ENCODE measurements at regions of chr6 and their contacts with region 1.

Region 1: DNA sequence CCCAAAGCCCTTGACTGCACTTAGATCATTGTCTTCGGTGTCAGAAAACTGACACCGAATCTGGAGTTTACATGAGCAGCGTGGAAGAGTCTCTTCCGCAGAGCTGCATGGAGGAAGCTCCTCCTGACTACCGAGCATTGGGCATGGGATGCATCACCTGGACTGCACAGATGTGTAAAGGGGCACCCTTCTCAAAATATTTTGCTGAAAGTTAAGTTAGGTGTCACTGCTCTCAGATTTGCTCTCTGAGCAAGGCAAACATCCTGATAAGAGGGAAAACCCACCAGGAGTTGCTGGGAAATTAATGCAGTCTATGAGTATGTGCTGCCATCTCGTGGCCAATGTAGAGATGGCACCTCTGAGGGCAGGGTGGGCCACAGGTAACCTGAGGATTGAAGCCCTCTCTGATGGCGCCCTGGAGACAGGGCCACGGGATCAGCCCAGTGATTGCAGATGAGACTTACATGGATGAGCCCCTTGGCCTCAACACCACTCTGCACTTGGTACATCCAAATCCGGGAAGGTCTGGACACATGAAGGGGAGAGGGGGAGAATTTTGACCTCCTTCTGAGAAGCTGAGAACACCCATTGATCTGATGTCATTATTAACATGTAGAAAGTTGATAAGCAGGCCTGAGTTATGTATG is 129.9 kb downstream of the LPA start:
- DNase-seq: no peak
- ATAC-seq: peak; percentile 81
- H3K4me3 ChIP-seq: no peak overlapping the region
- H3K27ac ChIP-seq: no peak overlapping the region
- H3K4me1 ChIP-seq: no peaks in the 10 kb centered on the region
- H3K27me3 ChIP-seq: no peaks in the 10 kb centered on the region; a peak in 1 of 4 replicates
- CTCF ChIP-seq: peak; percentile 75 to 86 (median 84)
- EP300 ChIP-seq: no peak
- POLR2A ChIP-seq: no peak
- RAD21 ChIP-seq: peak; percentile 83

Region 2: DNA sequence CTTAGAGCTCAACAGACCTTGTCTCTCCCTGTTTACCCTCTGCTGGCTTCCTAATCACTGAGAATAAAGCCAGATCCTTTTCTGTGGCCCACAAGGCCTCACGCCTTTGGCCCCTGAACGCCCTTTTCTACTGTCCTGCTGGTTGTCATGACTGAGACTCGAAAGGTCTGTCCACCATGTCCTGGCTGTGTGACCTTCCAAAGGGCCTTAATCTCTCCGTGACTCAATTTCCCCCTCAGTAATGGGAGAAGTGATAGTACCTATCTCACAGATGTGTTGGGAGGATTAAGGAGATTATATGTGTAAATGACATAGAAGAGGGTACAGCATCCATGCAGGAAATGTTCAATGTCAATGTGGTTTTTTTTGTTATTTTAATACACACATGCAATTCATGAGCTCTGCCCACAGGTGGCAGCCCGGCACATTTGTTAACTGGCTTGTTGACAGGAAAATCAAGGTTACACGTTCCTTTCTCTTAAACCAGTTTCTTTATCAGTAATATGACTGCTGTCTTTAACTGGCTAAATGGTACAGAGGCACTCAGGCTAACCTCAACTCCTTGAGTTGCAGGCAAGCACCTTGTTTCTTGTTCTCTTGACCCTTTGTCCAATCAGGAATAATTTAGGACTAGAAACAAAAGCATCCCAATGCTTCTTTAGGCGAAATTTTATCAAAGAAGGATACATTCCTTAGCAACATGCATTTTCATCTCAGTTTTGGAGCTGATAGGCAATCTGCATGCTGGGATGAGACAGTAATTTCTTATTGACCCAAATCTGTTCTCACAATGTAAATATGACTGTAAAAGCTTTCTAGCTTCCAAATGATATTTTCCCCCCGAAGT is 396.0 kb before region 1 on chr6:
- CTCF ChIA-PET with region 1: interaction called, 15 read pairs
- POLR2A ChIA-PET with region 1: no interaction called
- RAD21 ChIA-PET with region 1: no interaction called
- SMC1A ChIA-PET with region 1: no interaction called
- in situ Hi-C with region 1: no loop called
- intact Hi-C with region 1: loop called (anchors 1 kb)
- DNase-seq: peak; percentile 23
- ATAC-seq: peak; percentile 72
- H3K4me3 ChIP-seq: no peak overlapping the region
- H3K27ac ChIP-seq: no peak overlapping the region
- H3K4me1 ChIP-seq: no peaks in the 10 kb centered on the region
- H3K27me3 ChIP-seq: no peaks in the 10 kb centered on the region; a peak in 1 of 4 replicates
- CTCF ChIP-seq: peak; percentile 67 to 85 (median 77)
- EP300 ChIP-seq: no peak
- POLR2A ChIP-seq: no peak
- RAD21 ChIP-seq: peak; percentile 73

Region 3: GRCh38 chr6:160455541-160456213 is 78.5 kb before region 1 on chr6:
- CTCF ChIA-PET with region 1: no interaction called
- POLR2A ChIA-PET with region 1: no interaction called
- RAD21 ChIA-PET with region 1: no interaction called
- SMC1A ChIA-PET with region 1: no interaction called
- in situ Hi-C with region 1: loop called (anchors 5 kb)
- intact Hi-C with region 1: loop called (anchors 1 kb)
- DNase-seq: peak; percentile 5
- ATAC-seq: peak; percentile 90
- H3K4me3 ChIP-seq: no peak overlapping the region
- H3K27ac ChIP-seq: no peak overlapping the region
- H3K4me1 ChIP-seq: no peaks in the 10 kb centered on the region
- H3K27me3 ChIP-seq: no peaks in the 10 kb centered on the region; a peak in 1 of 4 replicates
- CTCF ChIP-seq: peak; percentile 85 to 93 (median 89)
- EP300 ChIP-seq: no peak
- POLR2A ChIP-seq: no peak
- RAD21 ChIP-seq: peak; percentile 98

Region 4: GRCh38 chr6:160462551-160463109 is 71.5 kb before region 1 on chr6:
- CTCF ChIA-PET with region 1: no interaction called
- POLR2A ChIA-PET with region 1: no interaction called
- RAD21 ChIA-PET with region 1: no interaction called
- SMC1A ChIA-PET with region 1: no interaction called
- in situ Hi-C with region 1: loop called (anchors 5 kb)
- intact Hi-C with region 1: loop called (anchors 1 kb)
- DNase-seq: peak; percentile 69
- ATAC-seq: peak; percentile 86
- H3K4me3 ChIP-seq: no peak overlapping the region
- H3K27ac ChIP-seq: peak overlapping the region; percentile 11; the same call in 1 of the 2 replicates
- H3K4me1 ChIP-seq: peaks cover 18% of the 10 kb centered on the region
- H3K27me3 ChIP-seq: no peaks in the 10 kb centered on the region
- CTCF ChIP-seq: no peak
- EP300 ChIP-seq: peak in 1 of 2 experiments; percentile 56; a peak in 1 of 4 replicates
- POLR2A ChIP-seq: no peak
- RAD21 ChIP-seq: no peak

Region 5: DNA sequence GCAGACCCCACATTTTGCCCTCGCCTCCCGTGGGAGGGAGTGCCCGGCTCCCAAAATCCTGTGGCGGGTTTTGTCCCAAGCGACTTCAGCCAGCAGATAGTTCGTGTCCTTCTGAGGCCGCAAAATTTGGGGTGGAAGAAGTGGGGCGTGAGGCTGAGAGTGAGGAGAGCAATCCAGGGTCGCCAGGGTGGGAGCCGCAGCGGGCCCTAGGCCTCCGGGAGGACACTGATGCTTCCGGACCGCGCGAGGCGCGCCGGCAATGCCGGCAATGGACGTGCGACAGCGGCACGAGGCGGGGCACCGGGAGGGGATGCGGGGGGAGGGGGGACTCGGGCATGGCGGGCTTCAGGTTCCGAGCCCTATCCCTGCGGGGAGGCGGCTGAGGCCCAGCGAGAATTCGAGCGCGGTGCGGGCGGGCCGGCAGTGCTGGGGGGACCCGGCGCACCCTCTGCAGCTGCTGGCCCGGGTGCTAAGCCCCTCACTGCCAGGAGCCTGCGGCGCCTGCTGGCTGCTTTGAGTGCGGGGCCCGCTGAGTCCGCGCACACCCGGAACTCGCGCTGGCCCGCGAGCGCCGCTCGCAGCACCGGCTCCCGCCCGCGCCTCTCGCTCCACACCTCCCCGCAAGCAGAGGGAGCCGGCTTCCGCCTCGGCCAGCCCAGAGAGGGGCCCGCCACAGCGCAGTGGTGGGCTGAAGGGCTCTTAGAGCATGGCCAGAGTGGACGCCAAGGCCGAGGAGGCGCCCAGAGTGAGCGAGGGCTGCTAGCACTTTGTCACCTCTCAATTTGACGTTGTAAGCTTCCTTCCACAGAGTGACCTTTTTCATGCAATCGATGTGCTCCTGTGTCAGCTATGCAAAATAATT is 13.9 kb before region 1 on chr6:
- CTCF ChIA-PET with region 1: interaction called, 69 read pairs
- POLR2A ChIA-PET with region 1: interaction called, 3 read pairs
- RAD21 ChIA-PET with region 1: interaction called, 6 read pairs
- SMC1A ChIA-PET with region 1: interaction called, 19 read pairs
- in situ Hi-C with region 1: no loop called
- intact Hi-C with region 1: loop called (anchors 1 kb)
- DNase-seq: no peak
- ATAC-seq: peak; percentile 89
- H3K4me3 ChIP-seq: peak overlapping the region; percentile 69; the same call in 1 of the 2 replicates
- H3K27ac ChIP-seq: no peak overlapping the region
- H3K4me1 ChIP-seq: no peaks in the 10 kb centered on the region
- H3K27me3 ChIP-seq: no peaks in the 10 kb centered on the region
- CTCF ChIP-seq: peak in 1 of 3 experiments; percentile 92; a peak in 4 of 6 replicates
- EP300 ChIP-seq: no peak
- POLR2A ChIP-seq: no peak
- RAD21 ChIP-seq: peak; percentile 74

Region 6: GRCh38 chr6:160583794-160584193 is 49.6 kb after region 1 on chr6:
- CTCF ChIA-PET with region 1: no interaction called
- POLR2A ChIA-PET with region 1: no interaction called
- RAD21 ChIA-PET with region 1: no interaction called
- SMC1A ChIA-PET with region 1: no interaction called
- in situ Hi-C with region 1: no loop called
- intact Hi-C with region 1: no loop called
- DNase-seq: no peak
- ATAC-seq: no peak
- H3K4me3 ChIP-seq: no peak overlapping the region
- H3K27ac ChIP-seq: no peak overlapping the region
- H3K4me1 ChIP-seq: no peaks in the 10 kb centered on the region
- H3K27me3 ChIP-seq: no peaks in the 10 kb centered on the region
- CTCF ChIP-seq: no peak
- EP300 ChIP-seq: no peak
- POLR2A ChIP-seq: no peak
- RAD21 ChIP-seq: no peak

Measured in GM12878 (cell line).